BJ (cell line): ENCODE measurements at regions of chr12 and their contacts with region 1.

Region 1: GRCh38 chr12:106136263-106136662 is 2.5 kb downstream of the NUAK1 start:
- DNase-seq: peak; percentile 62
- H3K4me3 ChIP-seq: peak overlapping the region; percentile 85
- H3K27me3 ChIP-seq: no peaks in the 10 kb centered on the region
- CTCF ChIP-seq: peak; percentile 75

Region 2: GRCh38 chr12:105504286-105504685 is 632.0 kb before region 1 on chr12:
- CTCF ChIA-PET with region 1: no interaction called
- POLR2A ChIA-PET with region 1: no interaction called
- DNase-seq: no peak
- H3K4me3 ChIP-seq: no peak overlapping the region
- H3K27me3 ChIP-seq: 0 out of 2 replicates have a peak, but pooled peaks cover 2% of the 10 kb centered on the region
- CTCF ChIP-seq: no peak

Region 3: GRCh38 chr12:105977652-105978051 is 158.6 kb before region 1 on chr12:
- CTCF ChIA-PET with region 1: interaction called, 13 read pairs
- POLR2A ChIA-PET with region 1: interaction called, 5 read pairs
- DNase-seq: peak; percentile 78
- H3K4me3 ChIP-seq: no peak overlapping the region
- H3K27me3 ChIP-seq: no peaks in the 10 kb centered on the region
- CTCF ChIP-seq: no peak

Region 4: DNA sequence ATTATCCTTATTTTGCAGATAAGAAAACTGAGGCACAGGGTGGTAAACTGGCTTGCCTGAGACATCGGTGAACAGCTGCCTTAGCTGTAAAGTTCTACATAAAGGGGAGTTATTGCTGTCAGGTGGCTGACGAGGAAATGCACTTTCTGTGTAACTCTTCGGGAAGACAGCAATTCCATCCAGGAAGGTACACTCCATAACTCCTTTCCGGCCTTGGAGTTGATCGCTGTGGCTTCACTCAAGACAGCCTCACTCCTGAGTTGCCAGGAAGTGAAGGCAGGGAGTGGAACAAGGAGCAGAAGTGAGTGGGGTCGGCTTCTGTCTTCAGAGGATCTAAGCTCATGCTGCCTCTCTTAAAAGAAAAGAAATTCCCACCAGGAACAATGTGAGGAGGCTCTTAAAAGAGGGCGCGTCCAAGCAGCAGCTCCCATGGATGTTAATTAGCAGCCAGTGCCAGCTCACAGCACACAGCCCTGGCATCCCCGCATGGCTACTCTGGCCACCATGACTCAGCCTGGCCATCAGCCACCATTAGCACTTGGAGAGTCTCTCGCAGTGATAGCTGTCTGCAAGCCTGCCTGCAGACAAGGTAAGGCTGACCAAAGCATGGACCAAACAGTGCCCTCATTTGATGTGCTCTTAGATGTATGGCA is 57.8 kb before region 1 on chr12:
- CTCF ChIA-PET with region 1: interaction called, 26 read pairs
- POLR2A ChIA-PET with region 1: interaction called, 3 read pairs
- DNase-seq: no peak
- H3K4me3 ChIP-seq: no peak overlapping the region
- H3K27me3 ChIP-seq: no peaks in the 10 kb centered on the region
- CTCF ChIP-seq: no peak

Region 5: DNA sequence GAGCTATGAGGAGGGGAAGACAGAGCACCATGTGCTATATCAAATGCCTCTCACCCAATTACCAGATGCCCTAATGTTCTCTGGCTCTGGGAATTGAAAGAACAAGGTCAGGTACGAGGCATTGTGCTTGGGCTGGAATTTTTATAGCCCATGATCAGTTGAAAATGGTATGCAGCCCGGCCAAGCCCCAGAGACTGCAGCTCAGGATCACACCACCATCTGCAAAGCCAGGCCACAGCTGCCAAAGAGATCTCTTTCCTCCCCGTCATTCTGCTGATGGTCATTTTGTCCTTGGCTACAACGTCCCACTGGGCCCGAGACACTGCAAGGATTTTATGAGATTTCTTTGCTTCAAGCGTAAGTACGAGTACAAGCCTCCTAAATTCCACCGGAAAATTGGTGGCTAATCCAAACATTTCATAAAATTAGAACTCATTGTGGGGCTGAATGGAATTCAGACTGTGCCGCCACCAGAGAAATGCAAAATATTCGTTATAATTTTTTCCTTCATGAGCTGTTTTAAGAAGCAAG is 12.6 kb before region 1 on chr12:
- CTCF ChIA-PET with region 1: interaction called, 12 read pairs
- POLR2A ChIA-PET with region 1: interaction called, 4 read pairs
- DNase-seq: peak; percentile 90
- H3K4me3 ChIP-seq: no peak overlapping the region
- H3K27me3 ChIP-seq: no peaks in the 10 kb centered on the region
- CTCF ChIP-seq: no peak

Region 6: GRCh38 chr12:106223485-106224354 is 87.5 kb after region 1 on chr12:
- CTCF ChIA-PET with region 1: interaction called, 17 read pairs
- POLR2A ChIA-PET with region 1: no interaction called
- DNase-seq: no peak
- H3K4me3 ChIP-seq: no peak overlapping the region
- H3K27me3 ChIP-seq: no peaks in the 10 kb centered on the region
- CTCF ChIP-seq: peak; percentile 98